Stomach (tissue), 19 donors: ENCODE measurements at regions of chr9 and their contacts with region 1.

Region 1: GRCh38 chr9:129320575-129321263 is 142.7 kb upstream of the IER5L start:
- DNase-seq: peak; percentile 79 to 92
- H3K4me3 ChIP-seq: peak overlapping the region; percentile 39 to 50 (median 40)
- H3K27ac ChIP-seq: peak overlapping the region; percentile 85 to 93 (median 89)
- H3K4me1 ChIP-seq: peaks cover 41 to 82% (median 70%) of the 10 kb centered on the region in 4 donors
- H3K27me3 ChIP-seq: no peaks in the 10 kb centered on the region
- CTCF ChIP-seq: peak in 1 of 7 experiments; percentile 8
- EP300 ChIP-seq: no peak
- POLR2A ChIP-seq: peak in 1 of 4 donors; percentile 63

Region 2: GRCh38 chr9:129202613-129203555 is 117.8 kb before region 1 on chr9:
- intact Hi-C with region 1: loop called (anchors 10 kb)
- DNase-seq: peak; percentile 87 to 94
- H3K4me3 ChIP-seq: peak overlapping the region; percentile 48 to 79 (median 66)
- H3K27ac ChIP-seq: peak overlapping the region; percentile 89 to 96 (median 93)
- H3K4me1 ChIP-seq: peaks cover 5 to 21% (median 12%) of the 10 kb centered on the region in 4 donors
- H3K27me3 ChIP-seq: no peaks in the 10 kb centered on the region
- CTCF ChIP-seq: peak in 1 of 7 experiments; percentile 8
- EP300 ChIP-seq: no peak
- POLR2A ChIP-seq: no peak

Region 3: GRCh38 chr9:129262261-129262660 is 58.5 kb before region 1 on chr9:
- intact Hi-C with region 1: loop called (anchors 10 kb)
- DNase-seq: no peak
- H3K4me3 ChIP-seq: no peak overlapping the region
- H3K27ac ChIP-seq: peak overlapping the region; percentile 7 to 66 (median 39)
- H3K4me1 ChIP-seq: peaks cover 9 to 17% (median 15%) of the 10 kb centered on the region in 4 donors
- H3K27me3 ChIP-seq: peaks cover 0 to 27% (median 10%) of the 10 kb centered on the region in 3 donors
- CTCF ChIP-seq: no peak
- EP300 ChIP-seq: no peak
- POLR2A ChIP-seq: no peak